HEK293 (cell line): ENCODE measurements at regions of chr10 and their contacts with region 1.

Region 1: GRCh38 chr10:99612167-99612831 is 7.9 kb downstream of the SLC25A28 start:
- H3K4me3 ChIP-seq: no peak overlapping the region
- H3K27ac ChIP-seq: no peak overlapping the region
- H3K4me1 ChIP-seq: 0 out of 2 replicates have a peak, but pooled peaks cover 3% of the 10 kb centered on the region
- CTCF ChIP-seq: peak; percentile 78

Region 2: GRCh38 chr10:99394256-99394655 is 218.0 kb before region 1 on chr10:
- CTCF ChIA-PET with region 1: interaction called, 34 read pairs
- POLR2A ChIA-PET with region 1: no interaction called
- H3K4me3 ChIP-seq: no peak overlapping the region
- H3K27ac ChIP-seq: no peak overlapping the region
- H3K4me1 ChIP-seq: peaks cover 19% of the 10 kb centered on the region
- CTCF ChIP-seq: no peak

Region 3: GRCh38 chr10:99484603-99485581 is 127.4 kb before region 1 on chr10:
- CTCF ChIA-PET with region 1: interaction called, 15 read pairs
- POLR2A ChIA-PET with region 1: interaction called, 3 read pairs
- H3K4me3 ChIP-seq: no peak overlapping the region
- H3K27ac ChIP-seq: no peak overlapping the region
- H3K4me1 ChIP-seq: no peaks in the 10 kb centered on the region
- CTCF ChIP-seq: no peak; the same call in 1 of the 2 replicates

Region 4: GRCh38 chr10:99534939-99535763 is 77.1 kb before region 1 on chr10:
- CTCF ChIA-PET with region 1: no interaction called
- POLR2A ChIA-PET with region 1: no interaction called
- H3K4me3 ChIP-seq: no peak overlapping the region; the same call in none of the 2 replicates
- H3K27ac ChIP-seq: no peak overlapping the region; the same call in 1 of the 2 replicates
- H3K4me1 ChIP-seq: peaks cover 2% of the 10 kb centered on the region; the same call in 1 of the 2 replicates
- CTCF ChIP-seq: no peak

Region 5: GRCh38 chr10:99590799-99591198 is 21.5 kb before region 1 on chr10:
- CTCF ChIA-PET with region 1: interaction called, 12 read pairs
- POLR2A ChIA-PET with region 1: interaction called, 5 read pairs
- H3K4me3 ChIP-seq: no peak overlapping the region
- H3K27ac ChIP-seq: no peak overlapping the region
- H3K4me1 ChIP-seq: no peaks in the 10 kb centered on the region
- CTCF ChIP-seq: no peak

Region 6: GRCh38 chr10:99595770-99596465 is 16.4 kb before region 1 on chr10:
- CTCF ChIA-PET with region 1: interaction called, 14 read pairs
- POLR2A ChIA-PET with region 1: interaction called, 5 read pairs
- H3K4me3 ChIP-seq: no peak overlapping the region
- H3K27ac ChIP-seq: no peak overlapping the region
- H3K4me1 ChIP-seq: no peaks in the 10 kb centered on the region
- CTCF ChIP-seq: no peak